K562 (cell line): ENCODE measurements at regions of chr5 and their contacts with region 1.

Region 1: DNA sequence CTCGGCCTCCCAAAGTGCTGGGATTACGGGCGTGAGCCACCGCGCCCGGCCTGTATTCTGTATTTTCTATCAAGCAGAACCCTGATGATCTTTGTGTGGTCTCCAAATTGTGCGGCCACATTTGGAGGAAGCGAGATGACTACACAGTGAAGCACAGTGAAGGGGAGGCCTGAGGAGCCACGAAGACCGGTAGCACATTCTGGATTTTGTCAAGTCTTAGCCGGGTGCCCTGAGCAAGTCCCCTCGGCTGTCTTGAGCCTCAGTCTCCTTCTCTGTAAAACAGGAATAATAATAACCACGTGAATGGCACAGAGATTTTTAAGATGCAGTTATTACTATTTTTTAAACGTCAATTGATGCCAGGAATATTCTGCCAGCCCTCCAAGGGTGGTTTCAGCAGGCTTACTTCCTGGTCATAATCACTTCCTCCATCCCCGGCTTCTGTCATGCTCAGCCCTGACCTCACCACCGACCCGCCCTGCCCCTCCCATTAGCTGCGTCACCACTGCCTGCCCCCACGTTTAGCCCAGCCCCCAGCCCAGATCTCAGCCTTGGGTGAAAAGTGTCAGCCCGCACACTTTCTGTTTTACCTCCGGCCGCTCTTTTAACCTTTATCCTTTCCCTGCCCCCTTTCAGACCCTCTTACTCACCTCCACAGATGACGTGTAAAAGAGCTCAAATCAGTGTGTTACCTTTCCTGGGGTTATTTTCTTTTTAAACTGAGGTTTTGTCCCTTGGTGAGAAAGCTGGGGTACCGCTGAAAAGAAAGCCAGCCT is 27.0 kb upstream of the ERGIC1 start:
- DNase-seq: peak; percentile 88 to 97 (median 92)
- ATAC-seq: peak; percentile 92
- H3K4me3 ChIP-seq: peak overlapping the region; percentile 21
- H3K27ac ChIP-seq: peak overlapping the region; percentile 93
- H3K4me1 ChIP-seq: peaks cover 42 to 45% of the 10 kb centered on the region in 2 experiments; a peak in 4 of 5 replicates
- H3K27me3 ChIP-seq: no peaks in the 10 kb centered on the region
- CTCF ChIP-seq: no peak
- EP300 ChIP-seq: peak; percentile 48; the same call in 1 of the 2 replicates
- POLR2A ChIP-seq: peak; percentile 78
- RAD21 ChIP-seq: no peak

Region 2: DNA sequence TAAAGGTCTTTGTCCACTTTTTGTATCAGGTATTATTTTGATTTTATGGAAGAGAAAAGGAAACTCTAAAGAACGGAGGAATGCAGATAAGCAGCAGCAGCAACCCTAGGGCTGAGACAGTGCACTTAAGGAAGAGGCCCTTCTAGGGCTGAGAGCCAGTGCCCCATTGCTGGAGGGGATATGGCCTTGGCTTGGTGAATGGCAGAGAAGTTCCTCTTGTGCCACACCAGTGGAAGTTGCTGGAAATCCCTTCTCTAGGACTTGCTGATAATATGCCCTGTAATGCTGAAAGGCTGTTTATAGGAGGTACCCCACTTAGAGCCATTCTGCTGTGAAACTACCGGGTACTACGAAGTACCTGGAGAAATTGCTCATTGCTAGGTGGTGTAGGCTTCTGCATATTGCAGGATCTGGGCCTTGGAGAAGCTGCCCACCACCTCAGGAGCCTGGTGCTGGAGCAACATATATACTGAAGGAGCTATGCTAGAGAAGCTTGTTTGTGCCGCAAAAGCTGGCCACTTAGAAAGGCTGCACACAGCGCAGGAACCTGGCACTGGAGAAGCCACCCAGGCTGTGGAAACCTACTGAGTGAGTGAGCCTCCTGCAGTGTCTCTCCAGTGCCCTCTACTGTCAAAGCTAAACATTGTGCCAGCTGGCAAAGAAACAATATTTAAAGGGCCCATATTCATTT is 513.9 kb before region 1 on chr5:
- CTCF ChIA-PET with region 1: no interaction called
- POLR2A ChIA-PET with region 1: no interaction called
- in situ Hi-C with region 1: no loop called
- intact Hi-C with region 1: no loop called
- DNase-seq: peak; percentile 19 to 56 (median 26)
- ATAC-seq: peak; percentile 94
- H3K4me3 ChIP-seq: no peak overlapping the region
- H3K27ac ChIP-seq: no peak overlapping the region
- H3K4me1 ChIP-seq: no peaks in the 10 kb centered on the region
- H3K27me3 ChIP-seq: peaks cover 3 to 24% of the 10 kb centered on the region in 2 experiments
- CTCF ChIP-seq: peak; percentile 73 to 78 (median 78)
- EP300 ChIP-seq: no peak
- POLR2A ChIP-seq: no peak
- RAD21 ChIP-seq: peak; percentile 71 to 81

Region 3: DNA sequence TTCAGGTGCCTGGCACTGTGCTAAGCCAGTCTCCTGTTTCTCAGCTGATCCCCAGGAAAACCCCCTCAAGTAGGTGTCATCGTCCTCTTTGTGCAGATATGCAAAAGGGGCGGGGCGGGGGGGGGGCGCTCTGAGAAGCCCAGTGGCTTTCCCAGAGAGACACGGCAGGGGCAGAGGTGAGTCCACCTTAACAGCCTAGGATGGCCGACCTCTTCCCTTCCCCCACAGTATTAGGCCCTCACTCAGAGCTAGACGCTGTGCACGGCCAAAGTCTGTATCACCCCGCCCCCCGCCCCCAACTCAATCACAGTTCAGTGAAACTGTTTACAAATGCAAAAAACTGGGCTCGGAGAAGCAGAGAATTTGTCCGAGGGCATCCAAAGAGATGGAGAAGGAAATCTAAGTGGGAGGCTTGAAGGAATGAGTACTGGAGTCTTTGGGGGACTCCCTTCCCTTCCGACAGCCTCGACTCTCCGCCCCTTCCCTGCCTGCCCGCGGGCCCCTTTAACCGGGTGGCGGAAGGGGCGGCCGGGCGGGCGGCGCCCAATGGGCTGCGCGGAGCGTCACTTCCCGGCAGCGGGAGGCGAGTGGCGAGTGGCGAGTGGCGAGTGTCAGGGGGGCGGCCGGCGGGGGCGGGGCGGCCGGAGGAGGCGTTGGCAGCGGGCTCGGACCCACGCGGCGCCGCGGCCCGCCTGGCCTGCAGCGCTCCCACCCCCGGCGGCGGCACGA is 26.8 kb after region 1 on chr5 and contains the start of gene ERGIC1:
- CTCF ChIA-PET with region 1: no interaction called
- POLR2A ChIA-PET with region 1: interaction called, 7 read pairs
- in situ Hi-C with region 1: no loop called
- intact Hi-C with region 1: loop called (anchors 2 kb)
- DNase-seq: peak; percentile 88 to 96 (median 92)
- ATAC-seq: peak; percentile 96
- H3K4me3 ChIP-seq: peak within 1 kb of the TSS; percentile 71
- H3K27ac ChIP-seq: peak within 1 kb of the TSS; percentile 70
- H3K4me1 ChIP-seq: peaks cover 12 to 33% of the 10 kb centered on the region in 2 experiments
- H3K27me3 ChIP-seq: no peaks in the 10 kb centered on the region
- CTCF ChIP-seq: peak in 1 of 3 experiments; percentile 12; a peak in 1 of 6 replicates
- EP300 ChIP-seq: no peak
- POLR2A ChIP-seq: peak; percentile 62
- RAD21 ChIP-seq: no peak
- polyA plus RNA-seq, gene ERGIC1: 5.5 to 11.7 TPM